ENCODE measurements at regions of chr11 and their contacts with region 1.

Region 1: DNA sequence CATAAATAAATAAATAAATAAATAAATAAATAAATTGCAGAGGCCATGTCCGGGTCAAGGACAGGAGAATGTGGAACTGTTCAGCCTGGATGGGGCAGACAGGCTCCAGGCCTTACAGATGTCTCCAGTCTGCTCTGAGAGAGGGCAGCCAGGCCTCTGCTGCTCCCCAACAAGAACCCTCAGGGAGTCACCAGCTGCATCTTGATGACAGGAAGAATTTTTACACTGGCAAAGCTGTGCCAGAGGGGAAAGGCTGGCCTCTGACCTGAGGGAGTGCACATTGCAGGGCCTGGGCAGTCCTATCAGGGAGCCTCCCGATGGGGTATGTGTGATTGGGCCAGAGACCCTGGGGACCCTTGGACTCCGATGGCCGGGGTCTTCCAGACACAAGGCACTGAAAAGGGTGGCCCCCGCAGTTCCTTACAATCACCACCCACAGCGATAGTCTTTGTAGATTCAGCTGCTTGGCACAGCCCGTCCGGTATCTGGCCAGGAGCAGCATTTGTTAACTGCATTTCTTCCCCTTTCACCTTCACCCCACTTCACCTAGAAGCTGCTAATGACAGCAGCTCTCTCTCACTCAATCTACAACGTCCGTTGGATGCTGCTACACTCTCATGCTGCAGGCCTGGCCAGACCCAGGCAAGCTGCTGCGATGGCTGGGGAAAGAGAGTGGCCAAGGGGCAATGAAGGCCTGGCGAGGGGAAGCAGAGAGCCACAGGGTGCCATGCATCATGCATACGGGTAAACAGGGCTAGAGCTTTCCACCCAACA is 8.1 kb downstream of the MOGAT2 start:
- DNase-seq: no peak
- ATAC-seq: no peak
- H3K4me3 ChIP-seq: no peak overlapping the region
- H3K27ac ChIP-seq: no peak overlapping the region
- H3K4me1 ChIP-seq: no peaks in the 10 kb centered on the region
- H3K27me3 ChIP-seq: no peaks in the 10 kb centered on the region
- CTCF ChIP-seq: no peak
- EP300 ChIP-seq: no peak
- POLR2A ChIP-seq: no peak
- RAD21 ChIP-seq: no peak

Region 2: GRCh38 chr11:75677275-75677674 is 48.5 kb before region 1 on chr11:
- CTCF ChIA-PET with region 1: no interaction called
- POLR2A ChIA-PET with region 1: no interaction called
- RAD21 ChIA-PET with region 1: no interaction called
- SMC1A ChIA-PET with region 1: no interaction called
- in situ Hi-C with region 1: loop called (anchors 5 kb)
- intact Hi-C with region 1: no loop called
- DNase-seq: no peak
- ATAC-seq: peak; percentile 96
- H3K4me3 ChIP-seq: no peak overlapping the region
- H3K27ac ChIP-seq: no peak overlapping the region
- H3K4me1 ChIP-seq: peaks cover 8% of the 10 kb centered on the region
- H3K27me3 ChIP-seq: no peaks in the 10 kb centered on the region
- CTCF ChIP-seq: no peak
- EP300 ChIP-seq: no peak
- POLR2A ChIP-seq: no peak
- RAD21 ChIP-seq: no peak

Measured in GM12878 (cell line).